ENCODE measurements at regions of chr5 and their contacts with region 1.

Region 1: DNA sequence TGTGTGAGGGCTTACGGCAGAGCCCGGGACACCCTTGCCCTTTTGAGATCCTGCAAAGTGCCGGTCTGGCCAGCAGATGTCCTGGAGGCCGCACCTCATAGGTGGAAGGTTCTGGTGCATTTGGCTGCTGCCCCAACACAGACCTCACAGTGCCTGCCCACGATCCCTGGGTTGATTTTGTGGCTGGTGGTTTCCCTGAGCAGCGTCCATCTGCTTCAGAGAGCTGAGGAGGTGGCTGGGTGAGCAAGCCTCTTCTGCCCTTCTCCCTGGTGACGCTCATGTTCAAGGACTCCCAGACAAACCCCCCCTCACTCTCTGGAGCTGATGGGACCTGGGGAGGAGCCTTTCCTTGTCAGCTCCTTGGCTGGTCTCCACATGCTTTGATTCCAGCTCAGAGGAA is 18.9 kb downstream of the BNIP1 start:
- DNase-seq: no peak
- ATAC-seq: peak; percentile 30

Region 2: DNA sequence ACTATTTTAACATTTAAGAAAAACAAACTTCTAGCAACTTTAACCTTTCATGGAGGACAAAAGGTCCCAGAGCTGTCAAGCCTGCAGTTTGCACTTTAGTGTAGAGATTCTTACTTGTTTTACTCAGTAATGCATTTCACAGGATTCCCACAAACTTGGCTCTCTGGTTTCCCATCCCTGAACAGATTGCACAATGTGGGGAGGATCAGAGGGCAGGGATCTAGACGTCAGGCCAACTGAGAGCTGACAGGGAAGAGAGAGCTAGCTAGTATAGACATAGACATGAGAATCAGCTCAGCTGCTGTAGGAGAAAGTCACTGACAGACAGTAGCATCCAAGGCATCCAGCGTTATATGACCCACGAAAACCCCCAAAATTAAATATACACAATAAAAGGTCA is 39.8 kb before region 1 on chr5:
- intact Hi-C with region 1: no loop called
- DNase-seq: no peak
- ATAC-seq: no peak

Region 3: GRCh38 chr5:173198049-173198448 is 34.8 kb after region 1 on chr5:
- intact Hi-C with region 1: loop called (anchors 1 kb)
- DNase-seq: no peak
- ATAC-seq: peak; percentile 45

Region 4: GRCh38 chr5:173229966-173230689 is 66.9 kb after region 1 on chr5:
- intact Hi-C with region 1: loop called (anchors 2 kb)
- DNase-seq: no peak
- ATAC-seq: peak; percentile 28

Region 5: DNA sequence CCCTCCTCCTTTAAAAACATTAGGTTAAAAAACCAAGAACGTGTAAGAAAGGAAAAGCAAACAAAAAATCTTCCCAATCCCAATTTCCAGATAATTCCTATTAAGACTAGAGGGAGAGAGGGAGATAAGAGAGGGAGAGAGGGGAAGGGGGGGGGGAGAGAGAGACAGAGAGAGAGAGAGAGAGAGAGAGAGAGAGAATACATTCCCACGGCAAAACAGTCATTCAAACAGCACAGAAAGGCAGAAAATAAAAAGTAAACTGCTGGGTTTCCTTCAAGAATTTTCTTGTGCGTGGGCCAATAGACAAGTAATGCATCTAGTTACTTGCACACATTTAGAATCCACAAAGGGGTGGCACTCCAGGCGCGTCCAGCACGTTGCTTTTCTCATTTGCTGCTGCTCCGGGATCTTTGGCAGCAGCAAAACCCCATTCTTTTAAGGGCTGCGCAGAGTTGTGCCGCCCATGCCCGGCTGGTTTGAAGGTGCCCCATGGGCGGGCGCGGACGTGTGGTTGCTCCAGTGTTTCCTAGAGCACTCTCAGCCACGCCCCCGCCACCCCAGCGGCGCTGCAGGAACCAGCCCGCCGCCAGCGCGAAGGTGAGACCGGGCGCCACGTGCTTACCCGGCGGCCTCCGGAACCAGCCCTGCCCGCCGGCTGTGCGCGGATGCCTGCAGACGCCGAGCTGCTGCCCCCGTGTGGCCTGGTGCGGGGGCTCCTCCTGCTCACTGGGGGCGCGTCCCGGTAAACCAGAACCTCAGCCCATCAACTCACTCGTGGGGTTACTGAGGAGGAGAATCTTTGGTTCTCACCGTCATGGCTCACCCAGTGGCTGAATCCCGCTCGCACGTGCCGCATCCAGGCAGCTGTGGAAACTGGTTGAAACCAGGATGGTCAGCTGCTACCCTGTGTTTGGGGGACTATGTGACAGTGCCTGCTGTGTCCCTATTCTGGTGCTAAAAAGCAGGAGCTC is 120.4 kb after region 1 on chr5:
- intact Hi-C with region 1: loop called (anchors 1 kb)
- DNase-seq: peak; percentile 88
- ATAC-seq: peak; percentile 91

Measured in Right ventricle myocardium inferior (tissue), 1 donor.